Activated B cell treated with CpG ODN at 0.5 μM for 24 hours (primary cell): ENCODE measurements at regions of chr18 and their contacts with region 1.

Region 1: DNA sequence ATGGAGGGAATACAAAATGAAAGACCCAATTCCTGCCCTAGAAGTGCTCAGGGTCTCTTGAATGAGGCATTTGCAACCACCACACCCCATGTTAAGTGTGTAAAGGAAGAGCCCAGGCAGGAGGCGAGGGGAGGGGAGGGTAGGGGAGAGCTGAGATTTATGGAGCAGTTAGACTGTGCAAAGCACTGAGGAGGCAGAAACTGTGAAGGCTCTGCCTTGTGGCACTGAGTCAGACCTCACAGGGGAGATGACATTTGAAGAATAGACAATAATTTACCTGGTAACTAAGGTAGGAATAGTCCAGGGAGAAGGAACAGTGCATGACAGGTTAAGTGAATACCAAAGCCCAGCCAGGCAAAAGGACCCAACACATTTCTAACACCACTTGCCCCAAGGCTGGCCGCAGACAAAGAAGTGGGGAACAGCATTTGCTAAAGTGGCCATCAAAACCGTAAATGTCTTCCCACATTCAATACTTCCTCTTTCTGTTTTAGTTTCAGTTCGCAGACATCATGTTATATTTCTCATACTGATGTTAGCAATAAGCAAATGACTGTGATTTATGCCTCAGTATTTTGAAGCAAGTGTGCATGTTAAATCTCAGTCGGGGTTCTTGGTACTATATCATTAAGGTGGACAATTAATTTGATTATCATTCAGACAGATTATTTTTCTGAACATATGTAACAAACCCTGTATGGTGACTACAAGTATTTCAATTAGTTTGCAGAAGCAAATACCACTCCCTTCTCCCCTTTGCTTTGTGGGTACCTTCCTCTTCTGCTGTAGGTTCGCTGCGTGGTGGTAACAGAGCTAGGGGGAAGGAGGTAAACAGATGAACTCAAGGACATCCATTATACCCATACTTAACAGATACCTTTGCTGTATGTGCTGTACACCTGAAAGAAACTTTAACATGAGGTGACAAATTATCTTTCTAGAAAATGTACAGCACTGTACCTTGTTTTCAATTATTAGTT is 27.5 kb downstream of the CDH20 start:
- DNase-seq: no peak
- ATAC-seq: peak; percentile 50
- H3K4me3 Mint-ChIP-seq: peak overlapping the region; percentile 44
- H3K27ac Mint-ChIP-seq: peak overlapping the region; percentile 15
- H3K4me1 Mint-ChIP-seq: peaks cover 14% of the 10 kb centered on the region
- H3K27me3 Mint-ChIP-seq: no peaks in the 10 kb centered on the region
- CTCF ChIP-seq: no peak

Region 2: GRCh38 chr18:61581578-61582201 is 221.0 kb after region 1 on chr18:
- CTCF ChIA-PET with region 1: no interaction called
- POLR2A ChIA-PET with region 1: no interaction called
- intact Hi-C with region 1: no loop called
- DNase-seq: peak; percentile 50
- ATAC-seq: peak; percentile 49
- H3K4me3 Mint-ChIP-seq: no peak overlapping the region
- H3K27ac Mint-ChIP-seq: no peak overlapping the region
- H3K4me1 Mint-ChIP-seq: peaks cover 6% of the 10 kb centered on the region
- H3K27me3 Mint-ChIP-seq: peaks cover 25% of the 10 kb centered on the region
- CTCF ChIP-seq: no peak

Region 3: GRCh38 chr18:61817086-61817485 is 456.4 kb after region 1 on chr18:
- CTCF ChIA-PET with region 1: no interaction called
- POLR2A ChIA-PET with region 1: no interaction called
- intact Hi-C with region 1: no loop called
- DNase-seq: no peak
- ATAC-seq: no peak
- H3K4me3 Mint-ChIP-seq: no peak overlapping the region
- H3K27ac Mint-ChIP-seq: no peak overlapping the region
- H3K4me1 Mint-ChIP-seq: no peaks in the 10 kb centered on the region
- H3K27me3 Mint-ChIP-seq: peaks cover 3% of the 10 kb centered on the region
- CTCF ChIP-seq: no peak

Region 4: GRCh38 chr18:62848946-62849345 is 1488.3 kb after region 1 on chr18:
- CTCF ChIA-PET with region 1: no interaction called
- POLR2A ChIA-PET with region 1: interaction called, 13 read pairs
- intact Hi-C with region 1: no loop called
- DNase-seq: no peak
- ATAC-seq: no peak
- H3K4me3 Mint-ChIP-seq: no peak overlapping the region
- H3K27ac Mint-ChIP-seq: no peak overlapping the region
- H3K4me1 Mint-ChIP-seq: peaks cover 11% of the 10 kb centered on the region
- H3K27me3 Mint-ChIP-seq: no peaks in the 10 kb centered on the region
- CTCF ChIP-seq: no peak